Stomach (tissue), 19 donors: ENCODE measurements at regions of chr7 and their contacts with region 1.

Region 1: GRCh38 chr7:55951637-55952351 is at the start of gene MRPS17:
- DNase-seq: peak; percentile 95 to 98
- H3K4me3 ChIP-seq: peak within 1 kb of the TSS; percentile 79 to 98 (median 87)
- H3K27ac ChIP-seq: peak within 1 kb of the TSS; percentile 47 to 90 (median 88)
- H3K4me1 ChIP-seq: peaks cover 9 to 23% (median 11%) of the 10 kb centered on the region in 4 donors
- H3K27me3 ChIP-seq: no peaks in the 10 kb centered on the region
- CTCF ChIP-seq: no peak
- EP300 ChIP-seq: no peak
- POLR2A ChIP-seq: peak in 2 of 4 donors; percentile 39 to 51
- total RNA-seq, gene MRPS17: 1.0 to 10.3 (median 2.3) TPM in 3 of 5 donors, not detected in the others

Region 2: GRCh38 chr7:55477781-55478374 is 473.9 kb before region 1 on chr7:
- intact Hi-C with region 1: no loop called
- DNase-seq: no peak
- H3K4me3 ChIP-seq: no peak overlapping the region
- H3K27ac ChIP-seq: no peak overlapping the region
- H3K4me1 ChIP-seq: peaks cover 0 to 2% (median 0%) of the 10 kb centered on the region in 4 donors
- H3K27me3 ChIP-seq: no peaks in the 10 kb centered on the region
- CTCF ChIP-seq: no peak
- EP300 ChIP-seq: no peak
- POLR2A ChIP-seq: no peak

Region 3: DNA sequence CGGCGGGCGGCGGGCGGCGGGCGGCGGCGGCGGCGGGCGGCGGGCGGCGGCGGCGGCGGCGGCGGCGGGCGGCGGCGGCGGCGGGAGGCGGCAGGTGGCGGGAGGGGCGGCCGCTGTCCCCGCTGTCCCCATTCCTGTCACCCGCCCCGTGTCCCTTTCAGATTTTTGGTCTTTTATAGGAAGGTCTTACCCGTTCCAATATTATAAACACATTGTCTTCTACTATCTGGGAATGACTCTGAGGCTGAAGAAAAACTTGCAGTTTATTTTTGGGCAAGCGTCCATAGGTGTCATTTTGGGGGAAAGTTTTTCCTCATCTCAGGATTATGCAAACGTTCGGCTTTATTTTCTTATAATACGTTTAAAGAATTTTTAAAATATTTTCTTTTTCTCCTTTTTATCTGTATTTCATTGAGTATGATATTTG is 64.0 kb before region 1 on chr7:
- intact Hi-C with region 1: loop called (anchors 10 kb)
- DNase-seq: peak in 1 of 2 donors; percentile 51
- H3K4me3 ChIP-seq: peak overlapping the region; percentile 38 to 50 (median 47)
- H3K27ac ChIP-seq: peak overlapping the region; percentile 43 to 78 (median 66)
- H3K4me1 ChIP-seq: peaks cover 0 to 11% (median 10%) of the 10 kb centered on the region in 4 donors
- H3K27me3 ChIP-seq: no peaks in the 10 kb centered on the region
- CTCF ChIP-seq: no peak
- EP300 ChIP-seq: no peak
- POLR2A ChIP-seq: no peak